Astrocyte of the cerebellum (primary cell): ENCODE measurements at regions of chr1 and their contacts with region 1.

Region 1: GRCh38 chr1:152912900-152913299 is 4.6 kb downstream of the IVL start:
- DNase-seq: no peak
- H3K4me3 ChIP-seq: no peak overlapping the region
- CTCF ChIP-seq: no peak

Region 2: GRCh38 chr1:152036267-152037216 is 876.4 kb before region 1 on chr1 and contains the start of gene S100A11:
- in situ Hi-C with region 1: no loop called
- DNase-seq: peak; percentile 64
- H3K4me3 ChIP-seq: peak within 1 kb of the TSS; percentile 90
- CTCF ChIP-seq: no peak

Region 3: DNA sequence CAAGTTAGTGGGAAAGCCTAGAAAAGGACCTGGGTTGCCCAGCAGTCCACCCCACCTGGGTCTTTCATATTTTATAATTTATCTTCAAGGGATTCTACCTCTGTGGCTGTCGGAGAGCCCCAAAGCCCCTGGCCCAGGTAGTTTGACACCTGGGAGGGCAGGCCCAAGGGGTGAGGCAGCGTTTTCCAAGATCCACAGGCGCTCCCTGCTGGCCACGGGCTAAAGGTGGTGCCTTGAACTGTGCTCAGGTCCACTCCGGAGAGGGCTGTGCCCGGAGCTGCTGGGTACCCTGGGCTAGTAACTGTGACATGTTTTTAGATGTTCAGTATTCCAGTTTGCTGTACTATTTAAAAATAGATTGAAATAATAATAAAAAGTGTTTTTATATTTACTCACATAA is 461.6 kb before region 1 on chr1:
- in situ Hi-C with region 1: no loop called
- DNase-seq: no peak
- H3K4me3 ChIP-seq: no peak overlapping the region
- CTCF ChIP-seq: no peak

Region 4: GRCh38 chr1:152855661-152856060 is 57.2 kb before region 1 on chr1:
- in situ Hi-C with region 1: no loop called
- DNase-seq: no peak
- H3K4me3 ChIP-seq: no peak overlapping the region
- CTCF ChIP-seq: no peak

Region 5: DNA sequence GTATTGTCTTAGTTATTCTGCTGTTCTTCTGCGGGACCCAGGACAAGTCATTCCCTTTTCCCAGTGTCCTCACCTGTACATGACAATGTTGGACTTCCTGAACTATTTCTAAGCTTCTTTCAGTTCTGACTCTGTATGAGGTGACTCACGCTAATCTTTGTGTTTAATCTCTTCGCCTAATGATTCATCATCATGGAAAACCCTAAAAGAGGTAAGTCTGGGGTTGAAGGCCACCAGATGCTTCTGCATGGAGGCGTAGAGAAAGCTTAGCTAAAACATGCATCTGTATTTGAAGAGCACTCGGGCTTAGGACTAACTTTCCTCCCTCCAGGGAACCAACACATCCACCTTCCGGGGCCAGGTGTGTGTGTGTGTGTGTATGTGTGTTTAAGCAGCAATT is 41.5 kb after region 1 on chr1:
- in situ Hi-C with region 1: loop called (anchors 5 kb)
- DNase-seq: no peak
- H3K4me3 ChIP-seq: no peak overlapping the region
- CTCF ChIP-seq: no peak

Region 6: GRCh38 chr1:153100236-153100635 is 187.3 kb after region 1 on chr1:
- in situ Hi-C with region 1: no loop called
- DNase-seq: no peak
- H3K4me3 ChIP-seq: no peak overlapping the region
- CTCF ChIP-seq: no peak